Natural killer cell (primary cell): ENCODE measurements at regions of chr1 and their contacts with region 1.

Region 1: DNA sequence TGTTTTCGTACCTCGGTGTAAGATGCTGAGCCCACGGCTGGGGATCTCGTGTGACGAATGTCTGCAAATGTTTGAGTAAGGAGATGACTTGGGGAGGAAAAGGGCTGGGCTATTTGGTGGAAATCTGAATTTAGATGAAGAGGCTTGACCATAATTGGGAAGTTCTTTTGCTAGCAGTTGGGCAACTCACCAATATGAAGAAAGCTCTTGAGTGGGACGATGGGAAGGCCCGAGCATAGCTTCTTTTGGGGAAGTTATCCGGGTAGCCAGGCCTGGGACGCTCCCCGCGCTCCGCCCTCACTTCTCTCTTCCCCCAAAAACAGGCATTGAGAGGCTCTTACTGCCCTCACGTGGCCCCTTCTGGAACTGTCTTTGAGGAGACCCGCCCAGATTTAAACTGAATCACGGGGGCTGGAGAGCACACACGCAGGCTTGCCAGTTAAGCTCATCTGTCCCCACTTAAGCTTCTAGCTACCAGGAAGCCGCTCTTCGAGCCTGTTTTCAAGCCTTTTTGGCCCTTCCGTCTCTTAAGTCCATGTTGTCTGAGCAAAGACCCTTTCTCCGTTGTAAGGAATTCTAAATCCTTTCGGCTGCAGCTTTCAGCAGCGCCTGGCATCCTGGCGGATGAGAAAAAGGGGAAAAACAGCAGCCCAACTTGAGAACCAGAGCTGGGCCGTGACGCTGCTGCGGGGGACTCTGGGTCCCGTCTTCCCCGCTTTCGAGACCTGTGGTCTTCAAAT is 93.1 kb downstream of the NID1 start:
- DNase-seq: peak; percentile 85 to 93
- ATAC-seq: peak; percentile 98 to 100 (median 99)
- H3K4me3 ChIP-seq: peak overlapping the region; percentile 3
- H3K4me3 Mint-ChIP-seq: peak overlapping the region; percentile 87
- H3K27ac ChIP-seq: peak overlapping the region; percentile 62
- H3K27ac Mint-ChIP-seq: peak overlapping the region; percentile 70 to 83
- H3K4me1 ChIP-seq: peaks cover 13% of the 10 kb centered on the region
- H3K4me1 Mint-ChIP-seq: peaks cover 15% of the 10 kb centered on the region in 2 donors
- H3K27me3 ChIP-seq: no peaks in the 10 kb centered on the region
- H3K27me3 Mint-ChIP-seq: peaks cover 0 to 3% of the 10 kb centered on the region in 2 donors
- CTCF ChIP-seq: peak; percentile 84

Region 2: DNA sequence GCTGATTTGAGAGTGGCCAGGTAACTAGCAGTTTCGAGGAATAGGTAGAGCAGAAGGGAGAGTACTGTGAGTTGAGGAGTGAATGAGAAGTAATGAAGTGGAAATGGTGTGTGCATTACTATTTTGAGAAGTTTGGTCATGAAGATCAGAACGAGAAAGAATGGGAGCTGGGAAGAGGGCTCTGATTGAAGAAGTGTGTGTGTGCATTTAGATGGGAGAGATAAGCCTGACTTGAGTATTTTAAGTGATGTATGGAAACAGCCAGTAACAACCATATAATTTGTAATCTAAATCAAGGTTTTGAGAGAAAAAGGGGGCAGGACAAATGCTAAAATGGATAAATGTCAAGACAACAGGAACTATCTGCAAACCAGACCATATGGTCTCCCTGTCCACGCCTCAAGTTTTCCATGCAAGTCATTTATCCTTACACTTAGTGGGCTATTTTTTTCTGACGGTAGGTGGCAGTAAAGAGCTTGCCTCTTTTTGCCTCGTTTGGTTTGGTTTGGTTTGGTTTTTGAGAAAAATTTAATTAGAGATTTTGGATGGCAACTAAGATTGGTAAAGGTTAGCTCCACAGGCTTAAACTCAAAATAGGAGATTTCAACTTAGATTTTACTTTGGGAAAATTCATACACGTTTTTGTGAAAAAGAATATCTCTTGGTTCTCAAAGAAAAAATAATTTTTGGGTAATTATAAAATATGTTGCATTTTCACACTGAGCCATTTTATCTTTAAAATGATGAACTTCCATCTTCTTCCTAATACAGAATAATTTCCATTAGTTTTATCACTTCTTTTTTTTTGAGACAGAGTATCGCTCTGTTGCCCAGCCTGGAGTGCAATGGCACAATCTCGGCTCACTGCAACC is 458.0 kb before region 1 on chr1:
- intact Hi-C with region 1: loop called (anchors 1 kb)
- DNase-seq: peak in 1 of 2 donors; percentile 83
- ATAC-seq: peak in 2 of 3 donors; percentile 57 to 69
- H3K4me3 ChIP-seq: no peak overlapping the region
- H3K4me3 Mint-ChIP-seq: no peak overlapping the region
- H3K27ac ChIP-seq: no peak overlapping the region
- H3K27ac Mint-ChIP-seq: no peak overlapping the region
- H3K4me1 ChIP-seq: no peaks in the 10 kb centered on the region
- H3K4me1 Mint-ChIP-seq: no peaks in the 10 kb centered on the region
- H3K27me3 ChIP-seq: no peaks in the 10 kb centered on the region
- H3K27me3 Mint-ChIP-seq: peaks cover 7 to 14% of the 10 kb centered on the region in 2 donors
- CTCF ChIP-seq: peak; percentile 87

Region 3: DNA sequence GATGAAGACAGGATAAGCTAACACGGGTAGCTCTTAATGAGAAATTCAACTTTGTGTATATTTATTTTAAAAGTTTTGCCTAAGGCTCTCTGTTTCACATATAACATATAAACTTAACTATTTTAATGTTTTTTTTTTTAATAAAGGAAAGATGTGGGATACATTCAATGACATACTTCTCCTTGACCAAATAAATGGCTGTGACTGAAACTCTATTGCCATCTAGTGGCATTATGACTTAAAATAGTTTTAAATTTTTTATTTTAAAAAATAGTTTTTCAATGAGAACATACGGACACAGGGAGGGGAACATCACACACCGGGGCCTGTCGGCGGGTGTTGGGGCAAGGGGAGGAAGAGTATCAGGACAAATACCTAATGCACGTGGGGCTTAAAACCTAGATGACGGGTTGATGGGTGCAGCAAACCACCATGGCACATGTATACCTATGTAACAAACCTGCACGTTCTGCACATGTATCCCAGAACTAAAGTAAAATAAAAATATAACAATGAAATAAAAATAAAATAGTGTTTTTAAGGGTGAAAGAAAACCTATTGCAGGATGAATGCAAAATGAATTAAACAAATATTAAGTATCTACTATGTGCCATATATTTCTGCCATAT is 188.5 kb before region 1 on chr1:
- intact Hi-C with region 1: loop called (anchors 5 kb)
- DNase-seq: peak in 1 of 2 donors; percentile 44
- ATAC-seq: no peak
- H3K4me3 ChIP-seq: no peak overlapping the region
- H3K4me3 Mint-ChIP-seq: no peak overlapping the region
- H3K27ac ChIP-seq: no peak overlapping the region
- H3K27ac Mint-ChIP-seq: no peak overlapping the region
- H3K4me1 ChIP-seq: no peaks in the 10 kb centered on the region
- H3K4me1 Mint-ChIP-seq: no peaks in the 10 kb centered on the region
- H3K27me3 ChIP-seq: no peaks in the 10 kb centered on the region
- H3K27me3 Mint-ChIP-seq: no peaks in the 10 kb centered on the region
- CTCF ChIP-seq: peak; percentile 58

Region 4: DNA sequence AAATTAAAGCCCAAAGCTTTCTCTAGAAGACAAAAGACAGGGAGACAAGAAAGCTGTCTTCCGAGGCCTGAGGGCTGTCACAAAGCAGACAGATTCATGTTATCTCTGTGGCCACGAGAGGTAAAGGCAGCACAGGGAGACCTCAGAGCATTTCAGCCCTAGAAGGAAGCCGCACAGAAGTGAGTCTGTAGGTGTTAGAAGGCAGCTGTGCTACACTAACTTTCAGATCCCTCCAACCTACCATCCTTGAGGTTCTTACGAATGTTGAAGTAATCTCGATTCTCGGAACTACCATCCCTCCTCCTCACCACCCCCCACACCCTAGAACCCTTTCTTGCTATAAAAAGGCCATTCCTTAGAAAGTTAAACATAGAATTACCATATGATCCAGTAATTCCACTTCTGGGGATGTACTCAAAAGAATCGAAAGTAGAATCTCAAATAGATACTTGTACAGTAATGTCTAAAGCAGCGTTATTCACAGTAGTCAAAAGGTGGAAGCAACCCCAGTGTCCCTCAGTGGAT is 83.6 kb before region 1 on chr1:
- intact Hi-C with region 1: loop called (anchors 5 kb)
- DNase-seq: peak in 1 of 2 donors; percentile 79
- ATAC-seq: peak; percentile 70 to 84 (median 80)
- H3K4me3 ChIP-seq: no peak overlapping the region
- H3K4me3 Mint-ChIP-seq: no peak overlapping the region
- H3K27ac ChIP-seq: peak overlapping the region; percentile 67
- H3K27ac Mint-ChIP-seq: peak overlapping the region; percentile 80 to 90
- H3K4me1 ChIP-seq: peaks cover 43% of the 10 kb centered on the region
- H3K4me1 Mint-ChIP-seq: peaks cover 31 to 40% of the 10 kb centered on the region in 2 donors
- H3K27me3 ChIP-seq: no peaks in the 10 kb centered on the region
- H3K27me3 Mint-ChIP-seq: no peaks in the 10 kb centered on the region
- CTCF ChIP-seq: no peak

Region 5: GRCh38 chr1:236253918-236254637 is 282.3 kb after region 1 on chr1:
- intact Hi-C with region 1: no loop called
- DNase-seq: no peak
- ATAC-seq: no peak
- H3K4me3 ChIP-seq: no peak overlapping the region
- H3K4me3 Mint-ChIP-seq: no peak overlapping the region
- H3K27ac ChIP-seq: no peak overlapping the region
- H3K27ac Mint-ChIP-seq: no peak overlapping the region
- H3K4me1 ChIP-seq: no peaks in the 10 kb centered on the region
- H3K4me1 Mint-ChIP-seq: peaks cover 0 to 12% of the 10 kb centered on the region in 2 donors
- H3K27me3 ChIP-seq: no peaks in the 10 kb centered on the region
- H3K27me3 Mint-ChIP-seq: no peaks in the 10 kb centered on the region
- CTCF ChIP-seq: no peak